ENCODE measurements at regions of chr2 and their contacts with region 1.

Region 1: GRCh38 chr2:14634201-14634884 is 1.8 kb downstream of the LRATD1 start:
- DNase-seq: peak; percentile 71 to 79
- ATAC-seq: peak; percentile 65 to 88 (median 76)
- H3K4me3 ChIP-seq: peak overlapping the region; percentile 26 to 65 (median 54)
- H3K27ac ChIP-seq: peak overlapping the region in 9 of 10 donors; percentile 32 to 83 (median 73)
- H3K4me1 ChIP-seq: peaks cover 7 to 41% (median 17%) of the 10 kb centered on the region in 9 donors
- H3K27me3 ChIP-seq: peaks cover 13 to 72% (median 60%) of the 10 kb centered on the region in 7 donors
- CTCF ChIP-seq: peak; percentile 22 to 76 (median 63)

Region 2: GRCh38 chr2:14428056-14428455 is 206.3 kb before region 1 on chr2:
- intact Hi-C with region 1: loop called in 3 of 10 experiments (anchors 10 kb)
- DNase-seq: peak in 1 of 2 donors; percentile 29
- ATAC-seq: peak in 5 of 8 donors; percentile 42 to 89 (median 81)
- H3K4me3 ChIP-seq: no peak overlapping the region
- H3K27ac ChIP-seq: no peak overlapping the region
- H3K4me1 ChIP-seq: no peaks in the 10 kb centered on the region
- H3K27me3 ChIP-seq: no peaks in the 10 kb centered on the region
- CTCF ChIP-seq: peak in 7 of 9 donors; percentile 10 to 47 (median 17)

Region 3: GRCh38 chr2:14535190-14535589 is 99.2 kb before region 1 on chr2:
- intact Hi-C with region 1: loop called in 2 of 10 experiments (anchors 10 kb)
- DNase-seq: no peak
- ATAC-seq: peak in 1 of 8 donors; percentile 19
- H3K4me3 ChIP-seq: no peak overlapping the region
- H3K27ac ChIP-seq: no peak overlapping the region
- H3K4me1 ChIP-seq: no peaks in the 10 kb centered on the region
- H3K27me3 ChIP-seq: peaks cover 0 to 2% (median 0%) of the 10 kb centered on the region in 7 donors
- CTCF ChIP-seq: no peak

Region 4: DNA sequence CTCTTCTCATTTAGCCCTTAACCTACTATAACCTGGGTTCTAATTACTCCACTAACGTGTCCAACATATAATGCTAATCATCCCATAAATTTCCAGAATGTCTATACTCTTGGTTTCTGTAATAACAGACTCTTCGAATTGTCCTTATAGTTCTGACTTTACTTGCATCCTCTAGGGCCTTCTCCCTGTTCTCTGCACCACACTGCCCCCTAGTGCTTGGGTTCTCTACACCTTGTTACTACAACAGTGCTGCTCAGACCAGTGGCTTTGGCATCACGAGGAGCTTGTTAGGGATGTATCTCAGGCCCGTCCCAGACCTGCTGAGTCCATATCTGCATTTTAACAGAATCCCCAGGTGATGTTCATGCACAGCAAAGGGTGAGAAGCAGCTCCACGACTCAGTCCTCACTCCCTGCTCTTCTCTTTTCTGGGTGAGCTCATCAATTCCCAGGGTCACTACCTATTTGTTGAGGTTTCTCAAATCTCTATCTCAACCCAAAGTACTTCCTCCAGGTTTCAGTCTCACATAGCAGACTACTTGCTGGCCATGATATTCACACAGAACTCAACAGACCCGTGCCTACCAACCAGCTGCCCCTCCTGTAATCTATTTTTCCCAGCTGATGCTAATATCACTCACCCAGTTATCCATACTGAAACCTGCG is 942.9 kb after region 1 on chr2:
- intact Hi-C with region 1: loop called in 1 of 10 experiments (anchors 5 kb)
- DNase-seq: peak; percentile 71 to 86
- ATAC-seq: peak; percentile 74 to 93 (median 88)
- H3K4me3 ChIP-seq: no peak overlapping the region
- H3K27ac ChIP-seq: no peak overlapping the region
- H3K4me1 ChIP-seq: peaks cover 0 to 4% (median 0%) of the 10 kb centered on the region in 9 donors
- H3K27me3 ChIP-seq: no peaks in the 10 kb centered on the region
- CTCF ChIP-seq: peak; percentile 39 to 83 (median 76)